Sigmoid colon (tissue), 7 donors: ENCODE measurements at regions of chr6 and their contacts with region 1.

Region 1: DNA sequence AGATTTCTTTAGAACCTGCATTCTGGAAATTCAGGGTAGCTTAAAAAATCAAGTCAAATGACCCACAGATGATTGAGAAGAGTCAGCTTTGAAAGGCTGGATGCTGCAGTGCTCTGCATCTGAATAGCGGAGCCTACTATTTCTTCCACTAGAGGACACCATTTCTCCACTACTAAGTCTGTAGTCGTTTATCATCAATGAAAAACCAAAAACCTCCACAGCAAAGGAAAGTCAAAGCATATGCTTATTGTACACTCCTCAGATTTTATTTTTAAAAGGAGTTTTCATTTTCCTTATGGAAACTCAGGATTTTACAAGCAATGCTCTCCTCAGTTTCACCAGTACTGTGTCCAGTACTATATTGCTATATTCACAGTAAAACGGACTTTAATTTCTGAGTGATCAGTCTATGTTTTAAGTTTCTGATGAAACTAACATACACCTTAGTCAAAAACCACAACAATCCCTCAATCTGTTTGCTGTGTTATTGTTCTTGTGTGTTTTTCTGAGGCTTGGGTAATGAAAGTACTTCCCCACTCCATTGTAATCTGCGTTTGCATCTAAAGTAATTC is 50.5 kb upstream of the ENPP5 start:
- DNase-seq: no peak
- H3K4me3 ChIP-seq: no peak overlapping the region
- H3K27ac ChIP-seq: no peak overlapping the region
- H3K4me1 ChIP-seq: no peaks in the 10 kb centered on the region
- H3K27me3 ChIP-seq: no peaks in the 10 kb centered on the region
- CTCF ChIP-seq: peak; percentile 41 to 74 (median 70)
- EP300 ChIP-seq: no peak
- POLR2A ChIP-seq: no peak

Region 2: DNA sequence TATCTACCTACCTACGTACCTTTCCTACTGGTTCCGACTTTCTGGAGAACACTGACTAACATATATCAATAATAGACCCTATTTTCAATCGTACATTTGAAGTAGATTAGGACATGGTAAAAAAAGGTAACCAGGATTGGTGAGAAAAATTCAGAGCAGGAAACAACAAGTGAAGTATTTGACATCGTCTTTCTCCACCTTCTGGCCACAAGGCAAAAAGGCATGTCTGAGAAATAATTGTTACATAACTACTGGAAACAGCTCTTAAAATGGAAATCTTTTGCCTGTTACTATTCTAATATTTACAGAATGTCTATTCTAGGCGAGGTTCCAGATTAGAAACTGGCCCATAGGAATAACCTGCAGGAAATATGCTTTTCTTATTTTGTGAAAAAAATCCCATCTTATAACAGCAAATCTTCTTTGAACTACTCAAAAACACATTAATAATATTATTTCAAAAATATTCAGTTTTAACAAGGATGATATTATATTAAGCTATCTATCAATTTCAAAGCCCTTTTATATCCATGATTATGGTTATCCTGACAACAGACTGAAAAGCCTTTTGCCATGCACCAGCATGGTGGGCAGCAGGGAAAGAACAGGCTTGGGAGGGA is 189.1 kb after region 1 on chr6:
- intact Hi-C with region 1: loop called (anchors 2 kb)
- DNase-seq: no peak
- H3K4me3 ChIP-seq: no peak overlapping the region
- H3K27ac ChIP-seq: no peak overlapping the region
- H3K4me1 ChIP-seq: peaks cover 0 to 16% (median 8%) of the 10 kb centered on the region in 4 donors
- H3K27me3 ChIP-seq: no peaks in the 10 kb centered on the region
- CTCF ChIP-seq: peak; percentile 46 to 88 (median 68)
- EP300 ChIP-seq: no peak
- POLR2A ChIP-seq: no peak

Region 3: GRCh38 chr6:46626228-46626909 is 405.1 kb after region 1 on chr6:
- intact Hi-C with region 1: loop called (anchors 10 kb)
- DNase-seq: no peak
- H3K4me3 ChIP-seq: no peak overlapping the region
- H3K27ac ChIP-seq: no peak overlapping the region
- H3K4me1 ChIP-seq: no peaks in the 10 kb centered on the region
- H3K27me3 ChIP-seq: no peaks in the 10 kb centered on the region
- CTCF ChIP-seq: peak in 3 of 4 experiments; percentile 48 to 60 (median 55)
- EP300 ChIP-seq: no peak
- POLR2A ChIP-seq: no peak